ENCODE measurements at regions of chr20 and their contacts with region 1.

Region 1: DNA sequence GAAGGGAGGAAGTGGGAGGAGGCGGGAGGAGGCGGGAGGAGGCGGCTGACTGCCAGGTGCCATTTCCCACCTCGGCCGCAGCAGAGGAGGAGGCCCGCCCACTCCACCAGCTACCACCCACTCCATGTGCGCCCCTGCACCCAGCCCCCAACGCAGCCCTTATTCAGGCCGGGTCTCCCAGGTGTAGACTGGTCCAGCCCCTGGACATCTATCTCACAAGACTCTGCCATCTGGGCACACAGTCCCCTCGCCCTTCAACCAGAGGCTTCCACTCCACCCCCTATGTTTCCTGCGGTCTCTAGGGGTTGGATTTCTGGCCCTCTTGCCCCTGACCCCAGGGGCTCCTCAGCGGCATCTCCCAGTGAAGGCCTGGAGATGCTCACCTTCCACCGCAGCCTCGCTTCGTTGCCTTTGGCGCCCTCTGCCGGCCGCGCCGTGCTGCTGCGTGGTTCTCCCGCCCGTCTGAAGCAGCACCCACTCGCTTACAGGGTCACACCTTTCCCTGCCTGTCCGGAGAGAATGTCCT is 32.6 kb upstream of the FAM83D start:
- DNase-seq: peak; percentile 74 to 84 (median 79)
- H3K4me3 ChIP-seq: peak overlapping the region in 1 of 2 donors; percentile 25
- H3K4me3 Mint-ChIP-seq: peak overlapping the region; percentile 22 to 75 (median 67)
- H3K27ac ChIP-seq: peak overlapping the region; percentile 64
- H3K27ac Mint-ChIP-seq: peak overlapping the region; percentile 90 to 96 (median 93)
- H3K4me1 ChIP-seq: peaks cover 36% of the 10 kb centered on the region
- H3K4me1 Mint-ChIP-seq: peaks cover 24 to 41% (median 28%) of the 10 kb centered on the region in 4 donors
- H3K27me3 ChIP-seq: no peaks in the 10 kb centered on the region
- H3K27me3 Mint-ChIP-seq: no peaks in the 10 kb centered on the region

Region 2: DNA sequence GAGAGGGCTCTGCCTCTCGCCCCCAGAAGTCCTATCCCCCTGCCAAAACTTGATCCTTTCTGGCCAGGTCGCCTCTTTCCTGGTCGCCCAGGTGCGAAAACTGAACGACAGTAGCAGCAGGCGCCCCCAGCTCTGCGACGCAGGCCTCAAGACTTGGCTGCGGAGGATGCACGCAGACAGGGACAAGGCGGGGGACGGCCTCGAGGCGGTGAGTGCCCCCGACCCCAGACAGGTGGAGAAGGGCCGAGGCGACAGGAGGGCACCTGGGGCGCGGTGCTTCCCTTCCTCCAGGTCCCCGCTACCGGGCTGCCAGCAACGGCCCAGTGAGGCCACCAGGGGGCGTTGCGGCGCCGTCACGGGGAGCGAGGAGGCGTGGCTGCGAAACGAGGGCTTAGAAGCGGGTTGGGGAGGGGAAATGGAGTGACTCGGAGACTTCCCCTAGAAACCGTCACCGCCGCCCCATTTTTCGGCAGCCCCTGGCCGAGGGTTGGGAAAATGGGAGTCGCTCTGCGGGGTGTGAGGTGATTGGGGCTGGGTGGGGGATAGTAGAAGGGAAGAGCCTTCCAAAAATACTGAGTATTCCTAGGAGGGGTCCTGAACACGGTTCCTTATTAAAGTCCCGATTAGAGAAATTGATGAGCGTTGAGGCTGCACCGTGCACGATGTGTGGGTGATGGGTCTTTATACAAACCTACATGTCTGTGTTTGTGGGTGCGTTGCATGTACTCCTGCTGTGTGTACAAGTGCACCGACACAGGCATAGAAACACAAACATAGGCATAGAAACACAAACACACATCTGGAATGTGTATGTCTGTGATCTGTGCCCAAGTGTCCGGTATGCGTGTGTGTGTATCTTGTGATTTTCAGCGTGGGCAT is 247.4 kb before region 1 on chr20:
- CTCF ChIA-PET with region 1: interaction called, 12 read pairs
- POLR2A ChIA-PET with region 1: no interaction called
- intact Hi-C with region 1: loop called (anchors 1 kb)
- DNase-seq: peak; percentile 84 to 91 (median 88)
- H3K4me3 ChIP-seq: peak overlapping the region in 1 of 2 donors; percentile 39
- H3K4me3 Mint-ChIP-seq: peak overlapping the region; percentile 67 to 87 (median 82)
- H3K27ac ChIP-seq: no peak overlapping the region
- H3K27ac Mint-ChIP-seq: peak overlapping the region in 6 of 7 donors; percentile 52 to 88 (median 75)
- H3K4me1 ChIP-seq: peaks cover 11% of the 10 kb centered on the region
- H3K4me1 Mint-ChIP-seq: peaks cover 5 to 8% (median 7%) of the 10 kb centered on the region in 4 donors
- H3K27me3 ChIP-seq: peaks cover 9% of the 10 kb centered on the region
- H3K27me3 Mint-ChIP-seq: peaks cover 24 to 36% of the 10 kb centered on the region in 2 donors

Region 3: DNA sequence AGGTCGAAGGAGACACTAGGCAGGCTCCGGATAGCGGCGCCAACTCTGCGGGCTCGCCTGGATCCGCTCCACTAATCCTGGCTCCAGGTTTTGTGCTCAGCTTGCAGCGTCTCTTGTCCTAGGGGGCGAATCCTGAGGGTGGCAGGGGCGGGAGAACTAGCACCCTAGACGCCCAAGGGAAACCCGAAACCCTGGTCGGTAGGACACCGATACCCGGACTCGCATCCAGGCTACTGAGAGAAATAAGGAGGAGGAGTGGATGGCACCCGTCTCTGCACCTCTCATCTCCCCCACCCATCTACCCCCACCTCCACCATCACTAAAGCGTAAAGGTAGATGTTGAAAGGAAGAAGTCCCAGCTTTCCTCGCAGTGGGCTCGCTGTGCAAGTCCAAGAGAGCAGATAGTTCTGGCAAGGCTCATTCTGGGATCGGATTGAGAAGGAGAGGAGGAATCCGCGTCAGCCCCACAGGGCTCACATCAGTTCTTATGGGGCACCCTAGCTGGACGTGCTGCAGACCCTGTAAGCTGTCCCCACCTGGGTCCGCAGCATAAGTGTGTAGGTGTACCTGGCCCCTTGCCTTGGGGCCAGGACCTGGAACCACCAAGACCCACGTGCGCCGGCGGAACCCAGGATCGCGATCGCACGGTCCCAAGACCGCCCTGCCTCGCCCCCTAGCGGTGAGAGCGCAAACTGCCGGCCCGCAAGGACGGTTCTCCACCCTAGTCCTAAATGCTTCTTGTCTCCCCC is 162.5 kb before region 1 on chr20:
- CTCF ChIA-PET with region 1: interaction called, 19 read pairs
- POLR2A ChIA-PET with region 1: interaction called, 3 read pairs
- intact Hi-C with region 1: loop called (anchors 1 kb)
- DNase-seq: peak; percentile 66 to 74 (median 71)
- H3K4me3 ChIP-seq: peak overlapping the region; percentile 44 to 75
- H3K4me3 Mint-ChIP-seq: peak overlapping the region; percentile 61 to 85 (median 73)
- H3K27ac ChIP-seq: no peak overlapping the region
- H3K27ac Mint-ChIP-seq: peak overlapping the region in 5 of 7 donors; percentile 11 to 94 (median 68)
- H3K4me1 ChIP-seq: peaks cover 46% of the 10 kb centered on the region
- H3K4me1 Mint-ChIP-seq: peaks cover 33 to 52% (median 44%) of the 10 kb centered on the region in 4 donors
- H3K27me3 ChIP-seq: peaks cover 74% of the 10 kb centered on the region
- H3K27me3 Mint-ChIP-seq: peaks cover 67 to 85% of the 10 kb centered on the region in 2 donors

Region 4: GRCh38 chr20:38790200-38791053 is 103.2 kb before region 1 on chr20:
- CTCF ChIA-PET with region 1: interaction called, 13 read pairs
- POLR2A ChIA-PET with region 1: no interaction called
- intact Hi-C with region 1: no loop called
- DNase-seq: peak in 2 of 5 donors; percentile 39 to 59
- H3K4me3 ChIP-seq: no peak overlapping the region
- H3K4me3 Mint-ChIP-seq: peak overlapping the region in 3 of 8 donors; percentile 52 to 66 (median 59)
- H3K27ac ChIP-seq: no peak overlapping the region
- H3K27ac Mint-ChIP-seq: peak overlapping the region in 4 of 7 donors; percentile 68 to 90 (median 85)
- H3K4me1 ChIP-seq: peaks cover 7% of the 10 kb centered on the region
- H3K4me1 Mint-ChIP-seq: peaks cover 0 to 7% (median 6%) of the 10 kb centered on the region in 4 donors
- H3K27me3 ChIP-seq: no peaks in the 10 kb centered on the region
- H3K27me3 Mint-ChIP-seq: no peaks in the 10 kb centered on the region

Region 5: GRCh38 chr20:38863024-38863851 is 30.4 kb before region 1 on chr20:
- CTCF ChIA-PET with region 1: interaction called, 19 read pairs
- POLR2A ChIA-PET with region 1: interaction called, 3 read pairs
- intact Hi-C with region 1: no loop called
- DNase-seq: peak; percentile 46 to 87 (median 51)
- H3K4me3 ChIP-seq: no peak overlapping the region
- H3K4me3 Mint-ChIP-seq: peak overlapping the region in 7 of 8 donors; percentile 13 to 77 (median 61)
- H3K27ac ChIP-seq: peak overlapping the region; percentile 61
- H3K27ac Mint-ChIP-seq: peak overlapping the region; percentile 92 to 96 (median 95)
- H3K4me1 ChIP-seq: peaks cover 59% of the 10 kb centered on the region
- H3K4me1 Mint-ChIP-seq: peaks cover 51 to 78% (median 62%) of the 10 kb centered on the region in 4 donors
- H3K27me3 ChIP-seq: no peaks in the 10 kb centered on the region
- H3K27me3 Mint-ChIP-seq: no peaks in the 10 kb centered on the region

Region 6: GRCh38 chr20:38907918-38908677 is 14.5 kb after region 1 on chr20:
- CTCF ChIA-PET with region 1: interaction called, 14 read pairs
- POLR2A ChIA-PET with region 1: no interaction called
- intact Hi-C with region 1: no loop called
- DNase-seq: no peak
- H3K4me3 ChIP-seq: no peak overlapping the region
- H3K4me3 Mint-ChIP-seq: no peak overlapping the region
- H3K27ac ChIP-seq: no peak overlapping the region
- H3K27ac Mint-ChIP-seq: peak overlapping the region in 3 of 7 donors; percentile 47 to 71 (median 58)
- H3K4me1 ChIP-seq: no peaks in the 10 kb centered on the region
- H3K4me1 Mint-ChIP-seq: peaks cover 2 to 5% (median 4%) of the 10 kb centered on the region in 4 donors
- H3K27me3 ChIP-seq: no peaks in the 10 kb centered on the region
- H3K27me3 Mint-ChIP-seq: no peaks in the 10 kb centered on the region

Region 7: GRCh38 chr20:39112178-39112743 is 218.6 kb after region 1 on chr20:
- CTCF ChIA-PET with region 1: no interaction called
- POLR2A ChIA-PET with region 1: no interaction called
- intact Hi-C with region 1: no loop called
- DNase-seq: no peak
- H3K4me3 ChIP-seq: no peak overlapping the region
- H3K4me3 Mint-ChIP-seq: no peak overlapping the region
- H3K27ac ChIP-seq: no peak overlapping the region
- H3K27ac Mint-ChIP-seq: no peak overlapping the region
- H3K4me1 ChIP-seq: no peaks in the 10 kb centered on the region
- H3K4me1 Mint-ChIP-seq: no peaks in the 10 kb centered on the region
- H3K27me3 ChIP-seq: peaks cover 6% of the 10 kb centered on the region
- H3K27me3 Mint-ChIP-seq: peaks cover 40 to 42% of the 10 kb centered on the region in 2 donors

Region 8: GRCh38 chr20:39800548-39800947 is 906.9 kb after region 1 on chr20:
- CTCF ChIA-PET with region 1: no interaction called
- POLR2A ChIA-PET with region 1: no interaction called
- intact Hi-C with region 1: no loop called
- DNase-seq: no peak
- H3K4me3 ChIP-seq: no peak overlapping the region
- H3K4me3 Mint-ChIP-seq: no peak overlapping the region
- H3K27ac ChIP-seq: no peak overlapping the region
- H3K27ac Mint-ChIP-seq: no peak overlapping the region
- H3K4me1 ChIP-seq: no peaks in the 10 kb centered on the region
- H3K4me1 Mint-ChIP-seq: no peaks in the 10 kb centered on the region
- H3K27me3 ChIP-seq: no peaks in the 10 kb centered on the region
- H3K27me3 Mint-ChIP-seq: no peaks in the 10 kb centered on the region